ENCODE measurements at regions of chr4 and their contacts with region 1.

Region 1: GRCh38 chr4:90127223-90127705 is at the start of gene CCSER1:
- DNase-seq: peak; percentile 66 to 68
- H3K4me3 ChIP-seq: peak within 1 kb of the TSS; percentile 57
- H3K4me3 Mint-ChIP-seq: peak within 1 kb of the TSS; percentile 86
- H3K27ac Mint-ChIP-seq: peak within 1 kb of the TSS; percentile 74
- H3K4me1 ChIP-seq: 0 out of 2 replicates have a peak, but pooled peaks cover 3% of the 10 kb centered on the region
- H3K4me1 Mint-ChIP-seq: no peaks in the 10 kb centered on the region
- H3K27me3 ChIP-seq: no peaks in the 10 kb centered on the region
- H3K27me3 Mint-ChIP-seq: peaks cover 7% of the 10 kb centered on the region
- CTCF ChIP-seq: no peak
- total RNA-seq, gene CCSER1: 3.6 and 4.1 TPM in 2 replicates

Region 2: GRCh38 chr4:89788206-89789072 is 338.8 kb before region 1 on chr4:
- CTCF ChIA-PET with region 1: no interaction called
- POLR2A ChIA-PET with region 1: no interaction called
- intact Hi-C with region 1: no loop called
- DNase-seq: no peak
- H3K4me3 ChIP-seq: no peak overlapping the region
- H3K4me3 Mint-ChIP-seq: no peak overlapping the region
- H3K27ac Mint-ChIP-seq: no peak overlapping the region
- H3K4me1 ChIP-seq: no peaks in the 10 kb centered on the region
- H3K4me1 Mint-ChIP-seq: no peaks in the 10 kb centered on the region
- H3K27me3 ChIP-seq: no peaks in the 10 kb centered on the region
- H3K27me3 Mint-ChIP-seq: peaks cover 2% of the 10 kb centered on the region
- CTCF ChIP-seq: no peak

Region 3: DNA sequence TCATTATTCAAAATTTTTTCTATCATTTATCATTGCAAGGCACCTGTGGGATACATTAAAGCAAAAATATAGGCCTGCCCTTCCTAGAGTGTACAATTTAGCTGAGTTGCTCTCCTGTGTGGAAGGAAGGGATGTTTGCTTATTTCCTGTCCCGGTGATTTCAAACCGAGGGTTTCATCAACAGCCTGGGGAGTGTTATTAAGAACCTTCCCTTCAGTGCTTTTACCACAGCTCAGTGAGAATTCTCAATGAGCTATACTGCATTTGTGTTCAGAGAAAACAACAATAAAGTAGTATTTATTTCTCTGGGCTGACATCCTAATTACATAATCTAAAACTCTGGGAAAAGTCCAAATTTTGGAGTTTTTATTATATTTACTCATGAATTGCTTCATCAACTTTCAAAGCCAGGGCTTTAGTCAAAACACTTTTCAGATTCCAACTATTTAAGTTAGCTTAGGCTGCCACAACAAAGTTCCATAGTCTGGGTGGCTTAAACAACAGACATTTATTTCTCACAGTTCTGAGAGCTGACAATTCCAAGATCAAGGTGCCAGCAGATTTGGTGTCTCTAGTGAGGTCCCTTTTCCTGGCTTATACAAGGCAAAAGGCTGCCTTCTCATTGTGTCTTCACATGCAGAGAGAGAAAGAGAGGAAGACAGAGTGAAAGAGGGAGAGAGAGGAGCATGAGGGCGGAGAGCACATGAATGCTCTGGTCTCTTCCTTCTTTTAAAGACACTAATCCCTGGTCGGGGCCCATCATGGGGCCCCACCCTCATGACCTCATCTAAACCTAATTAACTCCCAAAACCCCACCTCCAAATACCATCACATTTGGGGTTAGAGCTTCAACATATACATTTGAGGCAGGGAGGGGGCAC is 170.0 kb before region 1 on chr4:
- CTCF ChIA-PET with region 1: no interaction called
- POLR2A ChIA-PET with region 1: no interaction called
- intact Hi-C with region 1: loop called (anchors 5 kb)
- DNase-seq: peak in 1 of 2 experiments; percentile 2
- H3K4me3 ChIP-seq: no peak overlapping the region
- H3K4me3 Mint-ChIP-seq: no peak overlapping the region
- H3K27ac Mint-ChIP-seq: peak overlapping the region; percentile 58
- H3K4me1 ChIP-seq: no peaks in the 10 kb centered on the region; the same call in 1 of the 2 replicates
- H3K4me1 Mint-ChIP-seq: no peaks in the 10 kb centered on the region
- H3K27me3 ChIP-seq: no peaks in the 10 kb centered on the region
- H3K27me3 Mint-ChIP-seq: no peaks in the 10 kb centered on the region
- CTCF ChIP-seq: no peak

Region 4: DNA sequence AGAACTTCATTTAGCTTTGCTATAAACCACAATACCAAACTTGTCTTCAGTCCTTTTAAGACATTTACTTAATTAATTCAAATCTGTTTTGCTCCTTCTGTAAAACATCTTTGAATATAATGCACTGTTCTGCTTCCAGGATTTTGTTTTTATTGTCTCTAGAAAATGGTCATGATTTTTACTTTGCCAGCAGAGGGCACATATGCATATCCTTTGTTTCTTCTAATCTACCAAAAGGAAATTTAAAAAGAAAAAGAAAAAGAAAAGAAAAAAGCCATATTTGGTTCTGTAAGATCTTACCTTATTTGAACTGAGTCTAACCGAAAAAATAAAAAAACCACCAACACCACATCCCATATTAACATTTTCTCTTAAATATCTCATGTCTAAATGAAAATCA is 102.0 kb before region 1 on chr4:
- CTCF ChIA-PET with region 1: no interaction called
- POLR2A ChIA-PET with region 1: no interaction called
- intact Hi-C with region 1: loop called (anchors 10 kb)
- DNase-seq: no peak
- H3K4me3 ChIP-seq: no peak overlapping the region
- H3K4me3 Mint-ChIP-seq: no peak overlapping the region
- H3K27ac Mint-ChIP-seq: no peak overlapping the region
- H3K4me1 ChIP-seq: no peaks in the 10 kb centered on the region
- H3K4me1 Mint-ChIP-seq: no peaks in the 10 kb centered on the region
- H3K27me3 ChIP-seq: no peaks in the 10 kb centered on the region
- H3K27me3 Mint-ChIP-seq: no peaks in the 10 kb centered on the region
- CTCF ChIP-seq: peak; percentile 6 to 32

Region 5: DNA sequence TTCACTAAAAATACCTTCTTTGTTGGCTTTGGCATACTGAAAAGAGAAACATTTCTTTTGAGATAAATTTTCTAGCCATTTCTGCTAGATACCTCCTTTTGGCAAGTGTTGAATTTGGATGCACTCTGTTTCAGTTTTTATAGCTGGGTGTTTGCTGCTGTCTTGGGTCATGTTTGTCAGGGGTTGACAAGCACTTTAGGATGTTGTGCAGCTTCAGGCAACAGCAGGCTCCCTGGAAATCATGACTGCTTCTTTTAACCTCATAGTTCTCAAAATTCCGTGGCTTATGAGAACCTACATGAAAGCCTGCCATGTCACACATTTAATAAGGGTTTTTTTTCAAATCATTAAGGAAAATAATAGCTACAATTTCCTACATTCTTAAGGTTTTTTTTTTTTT is 36.6 kb after region 1 on chr4:
- CTCF ChIA-PET with region 1: no interaction called
- POLR2A ChIA-PET with region 1: no interaction called
- intact Hi-C with region 1: no loop called
- DNase-seq: no peak
- H3K4me3 ChIP-seq: no peak overlapping the region
- H3K4me3 Mint-ChIP-seq: no peak overlapping the region
- H3K27ac Mint-ChIP-seq: no peak overlapping the region
- H3K4me1 ChIP-seq: no peaks in the 10 kb centered on the region; the same call in 1 of the 2 replicates
- H3K4me1 Mint-ChIP-seq: peaks cover 15% of the 10 kb centered on the region
- H3K27me3 ChIP-seq: no peaks in the 10 kb centered on the region
- H3K27me3 Mint-ChIP-seq: no peaks in the 10 kb centered on the region
- CTCF ChIP-seq: no peak

Region 6: GRCh38 chr4:90174611-90175133 is 47.4 kb after region 1 on chr4:
- CTCF ChIA-PET with region 1: no interaction called
- POLR2A ChIA-PET with region 1: no interaction called
- intact Hi-C with region 1: loop called (anchors 2 kb)
- DNase-seq: peak; percentile 67 to 77
- H3K4me3 ChIP-seq: no peak overlapping the region
- H3K4me3 Mint-ChIP-seq: peak overlapping the region; percentile 63
- H3K27ac Mint-ChIP-seq: peak overlapping the region; percentile 85
- H3K4me1 ChIP-seq: peaks cover 46% of the 10 kb centered on the region
- H3K4me1 Mint-ChIP-seq: peaks cover 51% of the 10 kb centered on the region
- H3K27me3 ChIP-seq: no peaks in the 10 kb centered on the region
- H3K27me3 Mint-ChIP-seq: no peaks in the 10 kb centered on the region
- CTCF ChIP-seq: no peak

Region 7: GRCh38 chr4:90215286-90216039 is 88.2 kb after region 1 on chr4:
- CTCF ChIA-PET with region 1: no interaction called
- POLR2A ChIA-PET with region 1: no interaction called
- intact Hi-C with region 1: loop called (anchors 5 kb)
- DNase-seq: peak in 1 of 2 experiments; percentile 19
- H3K4me3 ChIP-seq: no peak overlapping the region
- H3K4me3 Mint-ChIP-seq: no peak overlapping the region
- H3K27ac Mint-ChIP-seq: no peak overlapping the region
- H3K4me1 ChIP-seq: peaks cover 16% of the 10 kb centered on the region
- H3K4me1 Mint-ChIP-seq: no peaks in the 10 kb centered on the region
- H3K27me3 ChIP-seq: no peaks in the 10 kb centered on the region
- H3K27me3 Mint-ChIP-seq: no peaks in the 10 kb centered on the region
- CTCF ChIP-seq: no peak